ENCODE measurements at regions of chr14 and their contacts with region 1.

Region 1: DNA sequence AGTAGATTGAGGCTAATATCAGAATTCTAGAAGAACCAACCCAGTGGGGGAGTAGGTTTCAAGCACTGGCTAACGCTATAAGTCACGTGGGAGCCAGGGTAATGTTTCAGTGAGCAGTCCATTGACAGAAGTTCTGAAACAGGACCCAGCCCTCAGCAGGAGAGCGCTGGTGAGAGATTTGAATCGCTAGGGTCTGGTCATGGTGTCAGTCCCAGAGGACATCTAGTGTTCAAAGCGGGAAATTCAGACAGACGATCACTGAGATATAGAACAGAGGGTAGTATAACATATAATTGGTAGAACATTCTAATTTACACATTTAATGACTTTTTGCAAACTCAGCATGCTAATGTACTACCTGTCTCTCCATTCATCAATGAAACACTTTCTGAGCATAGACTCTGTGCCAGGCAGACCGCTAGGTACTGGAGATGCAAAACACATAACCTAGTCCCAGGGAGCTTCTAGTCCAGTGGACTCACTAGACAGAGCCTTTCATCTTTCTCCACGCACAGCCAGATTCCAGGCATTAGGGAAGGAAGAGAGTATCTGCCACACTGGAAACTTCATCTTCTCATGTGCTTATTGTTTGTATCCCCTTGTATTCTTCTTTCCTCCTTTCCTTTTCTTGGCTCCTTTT is 35.4 kb upstream of the RNASE3 start:
- DNase-seq: peak in 2 of 3 donors; percentile 41 to 81
- ATAC-seq: peak; percentile 95
- H3K4me3 ChIP-seq: no peak overlapping the region
- H3K4me1 ChIP-seq: no peaks in the 10 kb centered on the region
- CTCF ChIP-seq: no peak

Region 2: GRCh38 chr14:20597103-20597502 is 258.7 kb before region 1 on chr14:
- intact Hi-C with region 1: no loop called
- DNase-seq: no peak
- ATAC-seq: no peak
- H3K4me3 ChIP-seq: no peak overlapping the region
- H3K4me1 ChIP-seq: no peaks in the 10 kb centered on the region
- CTCF ChIP-seq: no peak

Region 3: DNA sequence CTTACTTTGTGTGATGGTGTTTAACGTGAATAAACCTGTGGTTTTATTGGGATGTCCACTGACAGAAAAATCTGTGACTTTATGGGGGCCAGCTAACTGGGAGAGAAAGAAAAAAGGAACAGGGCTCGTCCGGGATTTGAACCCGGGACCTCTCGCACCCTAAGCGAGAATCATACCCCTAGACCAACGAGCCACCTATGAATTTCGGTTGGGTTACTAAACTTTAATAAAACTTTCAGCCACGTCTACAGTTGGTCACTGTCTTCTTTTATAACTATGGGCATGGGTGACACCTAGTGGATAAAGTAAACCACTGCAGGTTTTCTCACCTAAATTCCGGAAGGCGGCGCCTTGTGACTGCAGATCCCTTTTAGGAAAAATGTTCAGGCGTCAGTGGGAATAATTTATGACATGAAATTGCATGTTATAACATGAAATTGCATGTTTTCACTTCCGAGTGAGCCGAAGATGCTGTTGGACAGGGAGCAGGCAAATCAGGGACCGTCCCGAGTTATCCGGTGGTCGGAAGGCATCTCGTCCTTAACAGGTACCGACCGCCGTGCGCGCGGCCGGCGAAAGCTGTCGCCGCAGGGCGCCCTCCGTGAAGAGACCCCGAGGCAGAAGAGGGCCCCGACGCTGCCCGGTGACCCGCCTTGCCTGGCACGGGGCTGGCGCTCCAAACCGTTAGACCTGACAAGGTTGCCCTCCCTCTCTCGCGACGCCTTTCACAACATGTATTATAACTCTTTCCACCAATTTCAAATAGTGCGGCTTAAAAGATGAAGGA is 246.4 kb before region 1 on chr14:
- intact Hi-C with region 1: no loop called
- DNase-seq: peak; percentile 61 to 81 (median 66)
- ATAC-seq: peak; percentile 68
- H3K4me3 ChIP-seq: peak overlapping the region; percentile 33
- H3K4me1 ChIP-seq: peaks cover 12% of the 10 kb centered on the region
- CTCF ChIP-seq: peak; percentile 86

Region 4: GRCh38 chr14:20697273-20698017 is 158.3 kb before region 1 on chr14:
- intact Hi-C with region 1: loop called (anchors 5 kb)
- DNase-seq: peak in 2 of 3 donors; percentile 75 to 86
- ATAC-seq: peak; percentile 91
- H3K4me3 ChIP-seq: no peak overlapping the region
- H3K4me1 ChIP-seq: no peaks in the 10 kb centered on the region
- CTCF ChIP-seq: peak; percentile 40

Region 5: GRCh38 chr14:20760950-20761349 is 94.8 kb before region 1 on chr14:
- intact Hi-C with region 1: no loop called
- DNase-seq: no peak
- ATAC-seq: peak; percentile 38
- H3K4me3 ChIP-seq: no peak overlapping the region
- H3K4me1 ChIP-seq: no peaks in the 10 kb centered on the region
- CTCF ChIP-seq: no peak

Region 6: DNA sequence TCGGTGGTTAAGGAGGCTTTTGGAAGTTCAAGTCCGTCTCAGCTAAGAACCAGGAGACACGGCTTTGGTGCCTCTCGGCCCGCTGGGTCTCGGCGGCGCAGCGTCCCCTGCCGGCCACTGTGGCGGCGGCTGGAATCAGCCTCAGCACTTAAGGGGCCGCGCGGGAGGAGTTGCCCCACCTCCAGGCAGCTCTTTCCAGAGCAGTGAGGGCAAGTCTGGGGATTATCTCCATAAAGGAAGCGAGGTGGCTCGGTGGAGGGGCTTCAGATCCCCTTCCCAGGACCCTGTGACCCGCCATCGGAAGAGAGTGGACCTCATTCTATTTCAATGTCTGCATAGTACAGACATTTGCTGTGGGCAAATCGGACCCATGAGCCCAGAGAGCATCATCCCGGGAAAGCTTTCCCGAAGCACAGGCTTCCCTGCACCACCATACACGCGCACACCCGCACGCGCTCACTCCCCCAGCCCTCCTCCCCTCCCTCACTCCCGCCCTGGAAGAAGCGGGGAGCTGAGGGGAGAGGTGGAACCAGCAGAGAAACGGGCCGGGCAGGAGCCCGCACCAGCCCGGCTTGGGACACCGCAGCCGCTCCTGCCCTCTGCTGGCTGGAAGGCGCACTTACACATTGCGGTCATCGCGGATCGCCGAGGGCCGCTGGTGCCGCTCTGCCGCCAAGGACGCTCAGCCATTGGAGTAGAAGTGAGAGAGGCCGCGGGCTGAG is 115.4 kb after region 1 on chr14:
- intact Hi-C with region 1: loop called in 1 of 2 experiments (anchors 10 kb)
- DNase-seq: peak; percentile 77 to 86 (median 85)
- ATAC-seq: peak; percentile 98
- H3K4me3 ChIP-seq: no peak overlapping the region
- H3K4me1 ChIP-seq: peaks cover 2% of the 10 kb centered on the region
- CTCF ChIP-seq: peak; percentile 82

Region 7: GRCh38 chr14:20989572-20990551 is 134.1 kb after region 1 on chr14 and contains the start of gene METTL17:
- intact Hi-C with region 1: no loop called
- DNase-seq: peak; percentile 91 to 93 (median 93)
- ATAC-seq: peak; percentile 96
- H3K4me3 ChIP-seq: peak within 1 kb of the TSS; percentile 48
- H3K4me1 ChIP-seq: peaks cover 15% of the 10 kb centered on the region
- CTCF ChIP-seq: no peak
- total RNA-seq, gene METTL17: 61.1 to 87.3 (median 73.1) TPM

Measured in mucosa of descending colon (tissue), 3 donors.